ENCODE measurements at regions of chr3 and their contacts with region 1.

Region 1: GRCh38 chr3:16828815-16829214 is 55.9 kb upstream of the PLCL2 start:
- DNase-seq: peak in 33 of 35 experiments; percentile 19 to 77 (median 47)
- ATAC-seq: peak in 3 of 4 experiments; percentile 39 to 59 (median 42)
- H3K4me3 ChIP-seq: no peak overlapping the region
- H3K4me3 Mint-ChIP-seq: no peak overlapping the region
- H3K27ac ChIP-seq: no peak overlapping the region
- H3K27ac Mint-ChIP-seq: peak overlapping the region in 1 of 2 donors; percentile 20
- H3K4me1 ChIP-seq: peaks cover 9 to 12% of the 10 kb centered on the region in 2 experiments
- H3K4me1 Mint-ChIP-seq: peaks cover 19 to 24% (median 20%) of the 10 kb centered on the region in 3 donors
- H3K27me3 ChIP-seq: no peaks in the 10 kb centered on the region
- H3K27me3 Mint-ChIP-seq: no peaks in the 10 kb centered on the region

Region 2: DNA sequence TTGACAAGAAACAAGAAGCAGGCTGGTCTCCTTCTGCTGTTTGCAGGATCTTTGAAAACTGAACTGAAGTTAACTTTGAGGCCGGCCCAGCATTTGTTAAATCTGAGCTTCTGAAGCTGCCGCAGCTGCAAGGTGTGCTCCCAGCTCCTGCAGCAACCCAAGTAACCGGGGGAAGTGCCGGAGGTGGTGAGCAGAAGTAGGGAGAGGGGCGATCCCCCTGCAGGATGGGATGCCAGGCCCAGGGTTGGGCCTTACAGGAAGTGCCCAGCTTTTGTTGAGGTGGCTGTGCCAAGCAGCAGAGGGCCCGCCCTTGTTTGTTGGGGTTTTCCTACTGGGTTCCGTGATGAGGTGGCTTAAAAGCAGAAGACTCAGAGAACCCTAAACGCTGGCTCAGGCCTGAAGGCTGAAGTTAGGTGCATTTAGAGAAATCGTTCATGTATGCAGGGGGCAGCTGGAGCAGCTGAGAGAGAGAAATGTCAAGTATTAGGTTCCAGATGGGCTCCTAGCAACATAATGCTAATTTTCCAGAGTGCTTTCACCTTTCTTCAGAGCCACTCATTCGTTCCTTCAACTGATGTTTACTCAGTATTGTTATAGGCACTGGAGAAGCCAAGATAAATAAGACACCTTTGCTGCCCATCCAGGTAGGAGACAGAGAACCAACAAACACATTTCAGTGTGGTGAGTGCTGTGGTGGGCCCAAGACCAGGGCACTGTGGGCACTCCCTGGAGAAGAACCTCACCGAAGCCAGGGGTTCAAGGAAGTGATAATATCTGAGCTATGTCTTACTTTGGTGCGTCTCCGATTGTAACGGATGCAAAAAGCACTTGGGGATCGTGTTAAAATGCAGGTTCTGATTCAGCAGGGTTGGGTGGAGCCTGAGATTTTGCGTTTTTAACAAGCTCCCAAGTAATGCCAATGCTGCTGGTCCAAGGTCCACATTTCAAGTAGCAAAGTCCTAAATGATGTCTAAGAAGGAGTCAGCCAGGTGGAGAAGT is 13.8 kb after region 1 on chr3:
- CTCF ChIA-PET with region 1: interaction called, 4 to 27 read pairs
- POLR2A ChIA-PET with region 1: interaction called, 3 to 4 read pairs
- DNase-seq: peak; percentile 53 to 88 (median 71)
- ATAC-seq: peak; percentile 91 to 93 (median 92)
- H3K4me3 ChIP-seq: peak overlapping the region; percentile 35
- H3K4me3 Mint-ChIP-seq: peak overlapping the region; percentile 68 to 83 (median 79)
- H3K27ac ChIP-seq: peak overlapping the region; percentile 95
- H3K27ac Mint-ChIP-seq: peak overlapping the region; percentile 95 to 100
- H3K4me1 ChIP-seq: peaks cover 43 to 55% of the 10 kb centered on the region in 2 experiments
- H3K4me1 Mint-ChIP-seq: peaks cover 83 to 88% (median 85%) of the 10 kb centered on the region in 3 donors
- H3K27me3 ChIP-seq: no peaks in the 10 kb centered on the region
- H3K27me3 Mint-ChIP-seq: no peaks in the 10 kb centered on the region

Region 3: DNA sequence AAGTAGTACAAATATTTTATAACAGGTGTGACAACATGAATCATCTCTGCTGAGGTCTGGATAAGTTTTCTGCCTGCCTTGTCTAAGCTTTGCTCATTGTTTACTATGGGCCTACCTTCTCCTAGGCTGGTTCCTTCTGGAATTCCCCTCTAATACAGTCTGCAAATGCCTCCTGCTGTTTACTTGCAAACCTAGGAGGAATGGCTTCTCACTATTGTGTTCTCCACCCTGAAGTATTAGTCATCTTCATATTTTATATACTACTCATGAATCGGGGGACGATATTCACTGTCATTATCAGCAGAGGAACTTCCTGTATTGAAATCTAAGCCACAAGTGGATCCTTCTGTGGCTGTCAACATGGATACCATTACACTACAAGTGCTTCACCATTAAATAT is 210.8 kb after region 1 on chr3:
- CTCF ChIA-PET with region 1: interaction called in 1 of 2 experiments, 10 read pairs
- POLR2A ChIA-PET with region 1: no interaction called
- DNase-seq: peak in 1 of 35 experiments; percentile 20
- ATAC-seq: peak in 2 of 4 experiments; percentile 38 to 42
- H3K4me3 ChIP-seq: no peak overlapping the region
- H3K4me3 Mint-ChIP-seq: no peak overlapping the region
- H3K27ac ChIP-seq: no peak overlapping the region
- H3K27ac Mint-ChIP-seq: peak overlapping the region; percentile 30 to 80
- H3K4me1 ChIP-seq: peaks cover 3% of the 10 kb centered on the region in 2 experiments
- H3K4me1 Mint-ChIP-seq: peaks cover 40 to 63% (median 53%) of the 10 kb centered on the region in 3 donors
- H3K27me3 ChIP-seq: no peaks in the 10 kb centered on the region
- H3K27me3 Mint-ChIP-seq: no peaks in the 10 kb centered on the region